PC-9 (cell line): ENCODE measurements at regions of chr1 and their contacts with region 1.

Region 1: DNA sequence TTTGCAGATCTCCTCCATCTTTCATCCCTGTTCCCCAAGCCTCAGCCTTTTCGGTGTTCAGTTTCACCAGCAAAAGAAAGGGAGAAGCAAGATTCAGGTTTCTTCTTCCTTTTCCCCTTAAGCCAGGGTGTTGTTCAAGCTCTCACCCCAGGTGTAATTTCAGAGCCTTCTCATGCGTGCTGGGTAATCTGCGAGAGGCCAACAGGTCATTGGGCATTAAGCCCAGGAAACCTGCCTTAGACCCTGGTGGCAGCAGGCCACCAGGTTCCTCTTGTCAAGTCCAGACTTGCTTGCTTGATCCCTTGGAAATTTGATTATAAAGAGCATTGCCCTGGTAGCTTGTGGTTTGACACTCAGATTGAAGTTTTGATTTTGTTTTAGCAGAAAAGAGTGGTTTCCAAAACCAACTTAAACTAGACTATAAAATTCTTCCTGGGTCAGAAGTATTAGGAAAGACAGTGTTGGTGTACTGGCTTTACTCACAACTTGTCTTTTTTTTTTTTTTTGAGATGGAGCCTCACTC is 6.9 kb downstream of the AKR1A1 start:
- DNase-seq: peak; percentile 59 to 86
- H3K4me3 ChIP-seq: no peak overlapping the region
- H3K27ac ChIP-seq: no peak overlapping the region
- H3K4me1 ChIP-seq: peaks cover 2% of the 10 kb centered on the region
- H3K27me3 ChIP-seq: no peaks in the 10 kb centered on the region
- CTCF ChIP-seq: no peak

Region 2: GRCh38 chr1:44962729-44963128 is 594.8 kb before region 1 on chr1:
- CTCF ChIA-PET with region 1: interaction called, 12 read pairs
- POLR2A ChIA-PET with region 1: no interaction called
- intact Hi-C with region 1: no loop called
- DNase-seq: no peak
- H3K4me3 ChIP-seq: no peak overlapping the region
- H3K27ac ChIP-seq: no peak overlapping the region
- H3K4me1 ChIP-seq: 0 out of 2 replicates have a peak, but pooled peaks cover under 1% of the 10 kb centered on the region
- H3K27me3 ChIP-seq: no peaks in the 10 kb centered on the region
- CTCF ChIP-seq: no peak

Region 3: GRCh38 chr1:45589861-45590260 is 32.4 kb after region 1 on chr1:
- CTCF ChIA-PET with region 1: no interaction called
- POLR2A ChIA-PET with region 1: no interaction called
- intact Hi-C with region 1: no loop called
- DNase-seq: no peak
- H3K4me3 ChIP-seq: no peak overlapping the region
- H3K27ac ChIP-seq: no peak overlapping the region
- H3K4me1 ChIP-seq: peaks cover 17% of the 10 kb centered on the region
- H3K27me3 ChIP-seq: no peaks in the 10 kb centered on the region
- CTCF ChIP-seq: no peak